AG04449 (cell line): ENCODE measurements at regions of chr19 and their contacts with region 1.

Region 1: GRCh38 chr19:15177269-15178116 is 23.3 kb downstream of the NOTCH3 start:
- DNase-seq: no peak
- H3K4me3 ChIP-seq: no peak overlapping the region
- CTCF ChIP-seq: peak; percentile 98

Region 2: GRCh38 chr19:15264061-15264932 is 86.8 kb after region 1 on chr19:
- CTCF ChIA-PET with region 1: interaction called, 13 read pairs
- POLR2A ChIA-PET with region 1: no interaction called
- DNase-seq: no peak
- H3K4me3 ChIP-seq: no peak overlapping the region
- CTCF ChIP-seq: peak; percentile 81

Region 3: DNA sequence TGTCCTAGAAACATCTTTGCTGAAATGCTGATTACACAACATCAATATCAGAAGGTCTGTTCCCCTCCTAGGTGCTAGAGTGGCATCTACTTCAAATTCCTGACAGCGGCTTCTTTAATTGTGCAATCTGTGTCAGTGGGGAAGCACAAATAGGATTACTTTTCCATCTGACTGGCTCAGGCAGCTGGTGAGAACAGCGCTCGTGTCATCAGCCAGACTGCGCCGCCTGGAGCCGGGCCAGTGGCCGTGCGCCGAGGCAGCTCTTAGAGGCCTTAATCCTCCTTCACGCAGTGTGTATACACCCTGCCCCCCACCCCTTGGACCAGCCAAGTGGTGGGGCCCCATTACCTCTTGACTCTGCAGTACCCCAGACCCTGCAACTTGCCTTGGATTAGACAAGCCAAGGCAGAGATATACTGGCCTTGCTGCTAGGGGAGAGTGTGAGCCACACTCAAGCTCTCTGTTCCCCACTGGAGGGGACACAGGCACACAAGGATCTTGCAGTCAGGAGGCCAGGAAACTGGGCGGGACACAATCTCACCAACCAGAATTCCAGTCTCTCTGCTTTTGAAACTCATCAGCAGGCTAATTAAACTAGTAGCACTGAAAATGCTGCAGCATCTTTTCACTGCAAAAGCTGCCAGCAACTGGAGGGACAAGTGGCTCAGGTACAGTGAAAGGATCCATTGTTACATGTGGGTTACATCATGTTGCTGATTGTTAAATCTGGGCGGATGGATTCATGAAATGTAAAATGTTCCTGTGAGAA is 103.6 kb after region 1 on chr19:
- CTCF ChIA-PET with region 1: no interaction called
- POLR2A ChIA-PET with region 1: no interaction called
- DNase-seq: no peak
- H3K4me3 ChIP-seq: 0 out of 2 replicates have a peak overlapping the region, but pooled peaks have one; percentile 2
- CTCF ChIP-seq: peak; percentile 51

Region 4: GRCh38 chr19:15488489-15489224 is 311.2 kb after region 1 on chr19:
- CTCF ChIA-PET with region 1: no interaction called
- POLR2A ChIA-PET with region 1: no interaction called
- DNase-seq: no peak
- H3K4me3 ChIP-seq: no peak overlapping the region
- CTCF ChIP-seq: no peak

Region 5: GRCh38 chr19:15555759-15556633 is 378.5 kb after region 1 on chr19:
- CTCF ChIA-PET with region 1: interaction called, 10 read pairs
- POLR2A ChIA-PET with region 1: no interaction called
- DNase-seq: peak; percentile 59
- H3K4me3 ChIP-seq: peak overlapping the region; percentile 43
- CTCF ChIP-seq: peak; percentile 91